Activated B cell treated with CpG ODN at 0.5 μM for 24 hours (primary cell): ENCODE measurements at regions of chr3 and their contacts with region 1.

Region 1: GRCh38 chr3:42772670-42773408 is at the start of gene CCDC13:
- DNase-seq: peak; percentile 97
- ATAC-seq: peak; percentile 90
- H3K4me3 Mint-ChIP-seq: peak within 1 kb of the TSS; percentile 90
- H3K27ac Mint-ChIP-seq: peak within 1 kb of the TSS; percentile 89
- H3K4me1 Mint-ChIP-seq: peaks cover 13% of the 10 kb centered on the region
- H3K27me3 Mint-ChIP-seq: no peaks in the 10 kb centered on the region
- CTCF ChIP-seq: no peak
- total RNA-seq, gene CCDC13: 1.7 and 1.9 TPM in 2 replicates

Region 2: GRCh38 chr3:42600111-42600988 is 172.5 kb before region 1 on chr3 and contains the start of gene NKTR:
- CTCF ChIA-PET with region 1: no interaction called
- POLR2A ChIA-PET with region 1: no interaction called
- intact Hi-C with region 1: loop called (anchors 2 kb)
- DNase-seq: peak; percentile 98
- ATAC-seq: peak; percentile 92
- H3K4me3 Mint-ChIP-seq: peak within 1 kb of the TSS; percentile 91
- H3K27ac Mint-ChIP-seq: peak within 1 kb of the TSS; percentile 96
- H3K4me1 Mint-ChIP-seq: peaks cover 34% of the 10 kb centered on the region
- H3K27me3 Mint-ChIP-seq: no peaks in the 10 kb centered on the region
- CTCF ChIP-seq: no peak
- total RNA-seq, gene NKTR: 107 and 126 TPM in 2 replicates